ENCODE measurements at regions of chr6 and their contacts with region 1.

Region 1: GRCh38 chr6:13273931-13274706 is 54.2 kb downstream of the TBC1D7 start:
- DNase-seq: no peak
- H3K4me3 ChIP-seq: no peak overlapping the region
- H3K27ac ChIP-seq: no peak overlapping the region
- H3K4me1 ChIP-seq: 0 out of 7 replicates have a peak, but pooled peaks cover 0 to under 1% (median 0%) of the 10 kb centered on the region in 4 experiments
- H3K27me3 ChIP-seq: no peaks in the 10 kb centered on the region
- CTCF ChIP-seq: no peak
- EP300 ChIP-seq: no peak
- POLR2A ChIP-seq: no peak
- RAD21 ChIP-seq: no peak

Region 2: GRCh38 chr6:13101409-13101808 is 172.7 kb before region 1 on chr6:
- CTCF ChIA-PET with region 1: no interaction called
- POLR2A ChIA-PET with region 1: no interaction called
- DNase-seq: no peak
- H3K4me3 ChIP-seq: no peak overlapping the region
- H3K27ac ChIP-seq: no peak overlapping the region
- H3K4me1 ChIP-seq: peaks cover 0 to 2% (median under 1%) of the 10 kb centered on the region in 4 experiments; a peak in 2 of 7 replicates
- H3K27me3 ChIP-seq: no peaks in the 10 kb centered on the region
- CTCF ChIP-seq: no peak
- EP300 ChIP-seq: no peak
- POLR2A ChIP-seq: no peak
- RAD21 ChIP-seq: no peak

Region 3: GRCh38 chr6:13194852-13195251 is 79.3 kb before region 1 on chr6:
- CTCF ChIA-PET with region 1: interaction called, 49 read pairs
- POLR2A ChIA-PET with region 1: no interaction called
- DNase-seq: peak in 1 of 2 experiments; percentile 29
- H3K4me3 ChIP-seq: no peak overlapping the region
- H3K27ac ChIP-seq: no peak overlapping the region
- H3K4me1 ChIP-seq: peaks cover 2 to 9% (median 5%) of the 10 kb centered on the region in 4 experiments; a peak in 4 of 7 replicates
- H3K27me3 ChIP-seq: no peaks in the 10 kb centered on the region
- CTCF ChIP-seq: peak; percentile 23 to 69 (median 59)
- EP300 ChIP-seq: no peak
- POLR2A ChIP-seq: no peak
- RAD21 ChIP-seq: peak; percentile 63 to 72

Region 4: GRCh38 chr6:13250693-13251092 is 23.4 kb before region 1 on chr6:
- CTCF ChIA-PET with region 1: interaction called, 11 read pairs
- POLR2A ChIA-PET with region 1: no interaction called
- DNase-seq: no peak
- H3K4me3 ChIP-seq: no peak overlapping the region
- H3K27ac ChIP-seq: no peak overlapping the region
- H3K4me1 ChIP-seq: peaks cover 0 to 13% (median 8%) of the 10 kb centered on the region in 4 experiments; a peak in 4 of 7 replicates
- H3K27me3 ChIP-seq: no peaks in the 10 kb centered on the region
- CTCF ChIP-seq: no peak
- EP300 ChIP-seq: no peak
- POLR2A ChIP-seq: no peak
- RAD21 ChIP-seq: no peak

Region 5: DNA sequence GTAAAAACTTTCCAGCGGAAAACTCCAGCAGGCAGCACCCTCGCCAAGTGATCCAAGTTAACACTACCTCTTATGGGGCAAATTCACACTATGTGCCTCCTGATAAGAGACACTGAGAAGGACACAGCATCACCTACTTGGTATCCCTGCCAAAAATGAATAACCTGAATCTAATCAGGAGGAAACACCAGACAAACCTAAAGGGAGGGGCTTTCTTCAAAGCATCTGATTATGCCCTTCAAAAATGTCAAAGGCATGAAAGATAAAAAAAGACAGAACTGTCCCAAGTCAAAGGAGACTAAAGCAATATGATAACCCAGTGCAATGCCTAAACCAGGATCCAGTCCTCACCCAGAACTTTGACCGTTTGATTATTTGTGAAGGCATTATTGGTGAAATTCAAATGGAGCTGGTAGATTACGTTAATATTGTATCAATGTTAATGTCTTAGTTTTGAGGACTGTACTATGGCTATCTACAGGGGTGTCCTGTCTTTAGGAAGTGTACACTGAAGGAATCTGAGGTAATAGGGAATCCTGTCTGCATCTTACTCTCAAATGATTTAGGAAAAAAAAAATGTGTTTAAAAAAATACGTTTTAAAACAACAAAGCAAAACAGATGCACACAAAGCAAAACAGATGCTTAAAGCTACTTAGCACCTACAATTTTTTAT is 45.9 kb after region 1 on chr6:
- CTCF ChIA-PET with region 1: no interaction called
- POLR2A ChIA-PET with region 1: no interaction called
- DNase-seq: no peak
- H3K4me3 ChIP-seq: no peak overlapping the region
- H3K27ac ChIP-seq: no peak overlapping the region
- H3K4me1 ChIP-seq: no peaks in the 10 kb centered on the region
- H3K27me3 ChIP-seq: no peaks in the 10 kb centered on the region
- CTCF ChIP-seq: no peak
- EP300 ChIP-seq: no peak
- POLR2A ChIP-seq: no peak
- RAD21 ChIP-seq: no peak

Measured in H1 (cell line).